ENCODE measurements at regions of chr22 and their contacts with region 1.

Region 1: DNA sequence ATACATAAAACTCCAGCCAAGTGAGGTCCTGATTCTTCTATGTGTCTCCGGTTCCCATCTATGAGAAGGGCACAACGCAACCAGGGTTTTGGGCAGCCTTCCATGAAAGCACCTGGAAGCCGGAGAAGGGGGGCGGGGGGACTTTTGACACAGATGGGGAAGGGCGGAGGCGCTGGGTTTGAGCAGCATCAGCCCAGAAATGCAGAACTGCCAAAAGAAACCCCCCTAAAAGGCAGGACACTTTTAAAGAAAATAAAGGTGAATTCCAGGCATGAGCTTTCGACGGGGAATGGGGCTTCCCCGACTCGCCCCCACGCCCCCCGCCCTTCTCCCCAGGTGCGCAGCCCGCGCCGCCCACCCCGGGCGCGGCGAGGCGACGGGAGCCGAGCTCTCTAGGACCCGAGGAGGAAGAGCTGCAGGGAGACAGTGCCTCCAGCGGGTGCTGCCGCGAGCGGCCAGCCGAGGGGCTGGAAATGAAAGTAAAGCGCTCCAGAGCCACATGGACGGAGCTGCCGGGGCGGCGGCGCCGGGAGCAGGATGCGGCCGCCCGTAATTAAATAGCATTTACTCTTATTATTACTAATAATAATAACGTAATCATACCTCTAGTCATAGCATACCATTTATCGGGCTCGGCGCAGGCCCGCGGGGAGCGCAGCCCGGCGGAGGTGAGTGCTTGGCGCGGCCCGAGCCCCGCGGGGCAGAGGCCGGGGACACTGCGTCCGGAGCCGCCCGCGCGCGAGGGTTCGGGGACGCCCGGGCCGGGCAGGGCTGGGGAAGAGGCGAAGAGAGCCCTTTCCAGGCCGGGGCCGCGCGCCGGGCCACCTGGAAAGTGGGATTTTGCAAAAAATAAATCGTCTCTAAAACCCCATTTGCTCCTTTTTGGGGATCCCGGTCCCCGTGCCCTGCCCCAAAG is at the start of gene ZC3H7B:
- DNase-seq: peak; percentile 89 to 92
- ATAC-seq: peak; percentile 95
- H3K4me3 ChIP-seq: peak within 1 kb of the TSS; percentile 99
- H3K27ac ChIP-seq: peak within 1 kb of the TSS in 1 of 2 donors; percentile 52
- H3K4me1 ChIP-seq: peaks cover 2 to 3% of the 10 kb centered on the region in 2 donors
- H3K27me3 ChIP-seq: no peaks in the 10 kb centered on the region
- total RNA-seq, gene ZC3H7B: 34.8 to 50.0 TPM

Region 2: GRCh38 chr22:41204992-41205900 is 96.1 kb before region 1 on chr22 and contains the start of gene L3MBTL2:
- intact Hi-C with region 1: no loop called
- DNase-seq: peak; percentile 98 to 100
- ATAC-seq: peak; percentile 99
- H3K4me3 ChIP-seq: peak within 1 kb of the TSS; percentile 38 to 48
- H3K27ac ChIP-seq: peak within 1 kb of the TSS in 1 of 2 donors; percentile 43
- H3K4me1 ChIP-seq: no peaks in the 10 kb centered on the region
- H3K27me3 ChIP-seq: no peaks in the 10 kb centered on the region
- total RNA-seq, gene L3MBTL2: 12.3 to 18.5 TPM

Region 3: GRCh38 chr22:41341990-41342389 is 40.6 kb after region 1 on chr22:
- intact Hi-C with region 1: loop called in 1 of 2 experiments (anchors 1 kb)
- DNase-seq: no peak
- ATAC-seq: no peak
- H3K4me3 ChIP-seq: no peak overlapping the region
- H3K27ac ChIP-seq: no peak overlapping the region
- H3K4me1 ChIP-seq: no peaks in the 10 kb centered on the region
- H3K27me3 ChIP-seq: no peaks in the 10 kb centered on the region

Region 4: GRCh38 chr22:41367039-41367679 is 65.8 kb after region 1 on chr22:
- intact Hi-C with region 1: loop called in 1 of 2 experiments (anchors 5 kb)
- DNase-seq: peak; percentile 97 to 99
- ATAC-seq: peak; percentile 96
- H3K4me3 ChIP-seq: peak overlapping the region; percentile 5 to 24
- H3K27ac ChIP-seq: peak overlapping the region in 1 of 2 donors; percentile 43
- H3K4me1 ChIP-seq: no peaks in the 10 kb centered on the region
- H3K27me3 ChIP-seq: no peaks in the 10 kb centered on the region

Measured in aorta (tissue), 5 donors.